ENCODE measurements at regions of chr10 and their contacts with region 1.

Region 1: DNA sequence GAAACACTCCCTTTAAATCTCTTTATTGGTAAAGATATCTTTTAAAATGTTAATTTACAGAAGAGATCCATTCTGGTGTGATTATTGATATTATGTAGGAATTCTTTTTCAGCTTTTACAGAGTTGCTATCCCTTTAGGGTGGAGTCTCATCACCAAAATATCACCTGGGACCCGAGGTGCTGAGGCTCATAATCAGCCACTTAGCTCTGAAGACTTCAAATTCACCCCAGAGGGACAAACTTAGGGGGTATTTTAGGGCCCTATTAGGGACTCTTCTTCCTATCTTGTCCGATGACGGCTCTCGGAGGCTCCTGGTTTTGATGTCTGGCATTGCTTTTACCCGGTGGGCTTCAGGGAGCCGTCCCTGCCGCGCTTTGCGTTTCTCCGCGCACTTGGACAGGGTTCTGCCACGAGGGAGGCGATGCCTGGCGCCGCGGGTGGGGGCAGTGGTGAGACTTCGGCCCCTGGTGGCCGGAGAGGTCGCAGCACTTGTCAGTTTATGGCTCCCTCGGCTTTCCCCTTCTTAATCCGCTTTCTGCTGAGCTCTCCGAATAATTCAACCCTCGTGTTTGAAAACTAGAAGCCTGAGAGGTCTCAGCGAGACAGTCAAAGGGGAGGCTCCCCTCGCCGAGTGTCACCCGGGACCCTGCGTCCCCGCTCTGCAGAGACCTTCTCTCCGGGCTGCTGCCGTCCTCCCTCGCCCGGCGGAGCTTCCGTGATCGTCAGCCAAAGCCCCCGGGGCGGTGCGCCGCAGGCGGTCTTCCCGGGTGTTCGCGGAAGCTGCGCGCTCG is 27.8 kb downstream of the RBM20 start:
- DNase-seq: peak; percentile 51
- H3K4me3 Mint-ChIP-seq: peak overlapping the region; percentile 84
- H3K27ac Mint-ChIP-seq: no peak overlapping the region
- H3K4me1 Mint-ChIP-seq: peaks cover 2% of the 10 kb centered on the region
- H3K27me3 Mint-ChIP-seq: peaks cover 51% of the 10 kb centered on the region

Region 2: GRCh38 chr10:110651044-110651958 is 20.7 kb before region 1 on chr10:
- intact Hi-C with region 1: loop called (anchors 2 kb)
- DNase-seq: no peak
- H3K4me3 Mint-ChIP-seq: no peak overlapping the region
- H3K27ac Mint-ChIP-seq: no peak overlapping the region
- H3K4me1 Mint-ChIP-seq: peaks cover 21% of the 10 kb centered on the region
- H3K27me3 Mint-ChIP-seq: peaks cover 47% of the 10 kb centered on the region